HCT116 (cell line): ENCODE measurements at regions of chr14 and their contacts with region 1.

Region 1: DNA sequence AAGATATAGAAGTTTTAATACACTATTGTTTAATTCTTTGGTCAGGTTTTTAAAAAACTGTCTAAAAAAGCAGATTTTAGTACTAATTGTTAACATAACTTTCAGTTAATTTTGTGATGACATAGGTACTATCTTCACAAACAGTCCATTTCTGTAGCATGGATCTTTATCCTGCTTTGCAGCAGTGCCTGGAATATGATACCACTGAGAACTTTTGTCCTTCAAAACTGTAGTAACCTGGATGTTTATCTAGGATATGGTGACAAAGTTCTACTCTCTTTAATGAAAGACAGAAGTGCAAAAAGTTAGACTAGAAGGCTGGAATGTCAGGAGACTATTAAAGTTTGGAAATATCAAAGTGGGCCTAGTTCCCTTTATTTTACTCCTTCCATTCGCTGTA is 159.9 kb downstream of the SYNE2 start:
- DNase-seq: no peak
- ATAC-seq: no peak
- H3K4me3 ChIP-seq: no peak overlapping the region
- H3K27ac ChIP-seq: no peak overlapping the region
- H3K4me1 ChIP-seq: no peaks in the 10 kb centered on the region
- H3K27me3 ChIP-seq: no peaks in the 10 kb centered on the region
- CTCF ChIP-seq: no peak
- POLR2A ChIP-seq: no peak
- RAD21 ChIP-seq: no peak

Region 2: DNA sequence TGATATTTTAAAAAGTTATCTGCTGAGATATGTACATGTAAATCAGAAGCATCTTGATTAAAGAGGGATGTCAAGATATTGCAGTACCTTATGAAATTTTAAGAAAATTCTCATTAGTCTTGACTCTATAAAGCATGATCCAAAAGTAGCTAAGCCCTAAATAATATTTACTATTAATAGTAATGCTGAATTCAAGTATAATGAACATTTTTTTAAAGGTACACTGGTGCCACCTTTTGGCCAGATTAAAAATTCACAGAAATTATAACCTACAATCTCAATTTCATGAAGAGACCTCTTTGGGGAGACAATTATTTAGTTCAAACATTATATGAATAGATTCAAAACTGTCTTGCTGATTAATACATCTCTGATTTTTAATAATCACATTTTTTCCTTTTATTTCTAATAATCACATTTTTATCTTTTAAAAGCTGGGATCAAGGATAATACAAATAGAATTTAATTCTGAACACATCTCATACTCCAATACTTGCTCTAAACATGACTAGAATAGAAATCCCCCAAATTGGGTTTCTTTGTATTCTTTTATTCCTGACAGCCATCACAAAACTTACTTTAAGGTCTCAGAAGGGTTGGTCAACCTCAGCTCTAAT is 466.0 kb after region 1 on chr14:
- CTCF ChIA-PET with region 1: no interaction called
- POLR2A ChIA-PET with region 1: no interaction called
- RAD21 ChIA-PET with region 1: no interaction called
- intact Hi-C with region 1: loop called (anchors 10 kb)
- DNase-seq: no peak
- ATAC-seq: no peak
- H3K4me3 ChIP-seq: no peak overlapping the region
- H3K27ac ChIP-seq: no peak overlapping the region
- H3K4me1 ChIP-seq: no peaks in the 10 kb centered on the region
- H3K27me3 ChIP-seq: no peaks in the 10 kb centered on the region
- CTCF ChIP-seq: peak; percentile 21 to 38 (median 30); a peak in 3 of 6 replicates
- POLR2A ChIP-seq: no peak
- RAD21 ChIP-seq: peak; percentile 55